HepG2 (cell line): ENCODE measurements at regions of chr5 and their contacts with region 1.

Region 1: GRCh38 chr5:174777583-174777982 is 53.2 kb downstream of the MSX2 start:
- DNase-seq: no peak
- ATAC-seq: no peak
- H3K4me3 ChIP-seq: no peak overlapping the region
- H3K27ac ChIP-seq: no peak overlapping the region
- H3K4me1 ChIP-seq: no peaks in the 10 kb centered on the region
- H3K27me3 ChIP-seq: peaks cover 0 to 3% of the 10 kb centered on the region in 2 experiments; a peak in 2 of 5 replicates
- CTCF ChIP-seq: no peak
- EP300 ChIP-seq: no peak
- POLR2A ChIP-seq: no peak
- RAD21 ChIP-seq: no peak

Region 2: DNA sequence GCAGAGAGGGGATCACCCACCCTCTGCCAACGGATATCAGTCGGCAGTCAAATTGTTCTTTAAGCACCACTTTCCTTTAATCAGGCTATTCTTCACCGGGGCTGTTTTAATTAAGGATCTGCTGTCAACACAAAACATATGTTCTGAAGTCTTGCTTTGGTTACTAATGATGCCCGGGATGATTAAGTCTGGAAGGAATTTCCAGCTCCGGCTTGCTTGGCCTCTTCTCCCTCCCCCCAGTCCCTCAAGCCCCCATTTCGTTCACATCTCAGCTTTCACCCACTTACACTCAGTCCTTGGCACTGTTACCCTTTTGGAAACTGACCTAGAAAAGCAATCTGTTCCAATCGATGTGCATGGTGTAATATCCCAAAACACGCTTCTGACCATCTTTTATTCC is 21.5 kb after region 1 on chr5:
- CTCF ChIA-PET with region 1: no interaction called
- POLR2A ChIA-PET with region 1: no interaction called
- in situ Hi-C with region 1: no loop called
- intact Hi-C with region 1: loop called (anchors 1 kb)
- DNase-seq: no peak
- ATAC-seq: no peak
- H3K4me3 ChIP-seq: no peak overlapping the region
- H3K27ac ChIP-seq: no peak overlapping the region
- H3K4me1 ChIP-seq: no peaks in the 10 kb centered on the region
- H3K27me3 ChIP-seq: peaks cover 1 to 10% of the 10 kb centered on the region in 2 experiments; a peak in 3 of 5 replicates
- CTCF ChIP-seq: no peak
- EP300 ChIP-seq: no peak
- POLR2A ChIP-seq: no peak
- RAD21 ChIP-seq: no peak